ENCODE measurements at regions of chr9 and their contacts with region 1.

Region 1: GRCh38 chr9:10268531-10269485 is 344.0 kb downstream of the PTPRD start:
- DNase-seq: peak; percentile 5 to 73
- H3K4me3 ChIP-seq: no peak overlapping the region
- H3K27ac ChIP-seq: no peak overlapping the region
- H3K4me1 ChIP-seq: no peaks in the 10 kb centered on the region; a peak in 1 of 7 replicates
- H3K27me3 ChIP-seq: no peaks in the 10 kb centered on the region
- CTCF ChIP-seq: peak; percentile 49 to 88 (median 72)
- EP300 ChIP-seq: no peak
- POLR2A ChIP-seq: no peak
- RAD21 ChIP-seq: peak; percentile 95 to 96

Region 2: GRCh38 chr9:10059044-10059443 is 209.8 kb before region 1 on chr9:
- CTCF ChIA-PET with region 1: interaction called, 10 read pairs
- POLR2A ChIA-PET with region 1: no interaction called
- DNase-seq: no peak
- H3K4me3 ChIP-seq: no peak overlapping the region
- H3K27ac ChIP-seq: no peak overlapping the region
- H3K4me1 ChIP-seq: no peaks in the 10 kb centered on the region
- H3K27me3 ChIP-seq: peaks cover 0 to 2% (median 0%) of the 10 kb centered on the region in 4 experiments; a peak in 1 of 7 replicates
- CTCF ChIP-seq: no peak
- EP300 ChIP-seq: no peak
- POLR2A ChIP-seq: no peak
- RAD21 ChIP-seq: no peak

Measured in H1 (cell line).